PC-9 (cell line): ENCODE measurements at regions of chr5 and their contacts with region 1.

Region 1: GRCh38 chr5:39835371-39835770 is 410.6 kb upstream of the DAB2 start:
- DNase-seq: no peak
- H3K4me3 ChIP-seq: no peak overlapping the region
- H3K27ac ChIP-seq: no peak overlapping the region
- H3K4me1 ChIP-seq: no peaks in the 10 kb centered on the region
- H3K27me3 ChIP-seq: no peaks in the 10 kb centered on the region
- CTCF ChIP-seq: no peak

Region 2: DNA sequence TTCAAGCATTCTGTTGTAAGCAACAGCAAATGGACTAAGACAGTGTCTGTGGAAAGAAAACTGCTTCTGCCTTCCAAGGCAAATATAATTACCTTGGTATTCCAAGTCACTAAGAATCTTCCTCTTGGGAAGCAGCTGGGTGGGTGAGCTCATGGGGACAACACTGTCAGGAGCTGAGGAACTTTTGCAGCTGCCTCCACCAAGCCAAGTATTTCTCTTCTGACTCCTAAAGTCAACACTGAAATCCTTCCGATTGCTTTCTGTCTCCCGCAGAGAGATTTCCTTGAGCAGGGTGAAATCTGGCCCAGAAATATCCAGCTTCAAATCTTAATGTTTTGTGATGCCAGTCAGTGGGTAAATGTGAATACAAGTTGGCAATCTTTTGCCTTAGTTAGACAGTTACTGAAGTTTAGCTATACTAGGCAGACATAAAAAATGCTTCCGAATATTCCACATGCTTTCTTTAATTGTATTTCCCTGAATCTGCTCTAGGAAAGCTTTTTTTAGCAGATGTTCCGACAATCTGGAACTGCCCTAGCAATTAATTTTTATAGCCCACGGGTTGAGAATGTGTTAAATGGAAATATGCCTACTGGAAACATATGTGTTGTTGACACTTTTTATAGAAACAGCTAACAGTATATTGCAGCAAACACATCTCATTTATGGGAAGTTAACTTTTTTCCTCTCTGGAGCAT is 40.7 kb before region 1 on chr5:
- CTCF ChIA-PET with region 1: no interaction called
- POLR2A ChIA-PET with region 1: no interaction called
- intact Hi-C with region 1: no loop called
- DNase-seq: no peak
- H3K4me3 ChIP-seq: no peak overlapping the region
- H3K27ac ChIP-seq: no peak overlapping the region
- H3K4me1 ChIP-seq: no peaks in the 10 kb centered on the region
- H3K27me3 ChIP-seq: no peaks in the 10 kb centered on the region
- CTCF ChIP-seq: no peak

Region 3: DNA sequence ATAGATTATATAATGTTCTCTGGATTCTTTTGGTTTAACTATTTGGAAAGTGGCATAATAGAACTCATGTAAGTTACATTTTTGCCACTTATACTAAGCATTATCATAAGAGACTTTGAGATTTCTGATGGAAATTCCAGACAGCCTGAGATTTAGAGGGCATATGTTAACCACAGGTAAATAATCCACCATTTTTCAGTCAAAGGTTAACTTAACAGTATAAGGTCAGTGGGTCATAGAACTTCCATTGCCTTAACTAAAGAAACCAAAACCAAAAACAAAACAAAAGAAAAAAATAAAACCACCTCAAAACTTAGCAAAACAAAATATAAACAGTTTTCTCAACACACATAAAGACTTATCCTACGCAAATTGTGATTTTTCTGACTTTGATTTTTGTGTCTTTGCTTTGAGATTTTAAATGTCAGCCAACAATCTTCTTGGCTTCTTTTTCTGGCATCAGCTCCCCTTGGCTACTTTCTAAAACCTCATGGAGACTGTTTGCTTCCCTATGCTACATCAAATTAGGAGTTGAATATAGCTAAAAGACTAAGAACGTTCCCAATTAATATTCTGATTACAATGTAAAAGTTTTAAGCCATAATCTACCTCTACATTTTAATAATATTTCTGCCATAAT is 19.5 kb after region 1 on chr5:
- CTCF ChIA-PET with region 1: no interaction called
- POLR2A ChIA-PET with region 1: interaction called, 10 read pairs
- intact Hi-C with region 1: no loop called
- DNase-seq: no peak
- H3K4me3 ChIP-seq: no peak overlapping the region
- H3K27ac ChIP-seq: no peak overlapping the region
- H3K4me1 ChIP-seq: no peaks in the 10 kb centered on the region
- H3K27me3 ChIP-seq: no peaks in the 10 kb centered on the region
- CTCF ChIP-seq: no peak

Region 4: GRCh38 chr5:40089269-40089668 is 253.9 kb after region 1 on chr5:
- CTCF ChIA-PET with region 1: no interaction called
- POLR2A ChIA-PET with region 1: no interaction called
- intact Hi-C with region 1: no loop called
- DNase-seq: peak in 1 of 2 experiments; percentile 20
- H3K4me3 ChIP-seq: no peak overlapping the region
- H3K27ac ChIP-seq: no peak overlapping the region
- H3K4me1 ChIP-seq: no peaks in the 10 kb centered on the region
- H3K27me3 ChIP-seq: no peaks in the 10 kb centered on the region
- CTCF ChIP-seq: no peak